ENCODE measurements at regions of chr17 and their contacts with region 1.

Region 1: DNA sequence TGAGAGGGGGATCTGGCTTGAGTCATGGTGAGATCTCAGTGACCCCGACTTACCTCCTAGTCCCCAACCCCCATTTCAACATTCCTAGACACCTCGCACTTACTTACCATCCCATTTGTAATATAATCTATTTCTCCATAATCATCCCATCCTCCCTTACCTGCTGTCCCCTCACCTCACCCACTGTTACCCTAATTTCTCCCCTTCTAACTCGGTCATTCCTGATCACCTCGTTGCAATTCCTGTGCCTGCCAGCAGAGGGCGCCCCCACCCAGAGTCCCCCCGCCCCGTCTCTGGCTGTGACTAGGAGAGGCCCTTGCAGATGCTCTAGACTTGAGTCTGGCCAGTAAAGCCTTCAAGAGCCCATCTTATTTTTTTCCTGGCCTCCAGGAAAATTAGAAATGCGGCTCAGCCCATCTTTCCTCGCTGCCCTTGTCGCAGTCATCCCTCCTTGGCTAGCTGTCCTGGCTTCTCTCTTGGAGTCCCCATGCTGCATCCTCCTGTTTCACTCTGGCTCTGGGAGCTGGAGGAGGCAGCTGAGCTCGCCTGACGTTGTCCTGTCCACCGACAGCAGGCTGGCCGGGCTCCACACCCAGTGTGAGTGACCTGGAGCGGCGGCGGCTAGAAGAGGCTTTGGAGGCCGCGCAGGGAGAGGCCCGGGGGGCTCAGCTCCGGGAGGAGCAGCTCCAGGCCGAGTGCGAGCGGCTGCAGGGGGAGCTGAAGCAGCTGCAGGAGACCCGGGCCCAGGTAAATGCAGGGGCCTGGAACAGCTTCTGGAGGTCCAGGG is 5.0 kb downstream of the TBKBP1 start:
- DNase-seq: peak; percentile 51 to 90 (median 78)
- ATAC-seq: peak; percentile 53
- H3K4me3 ChIP-seq: no peak overlapping the region
- H3K4me3 Mint-ChIP-seq: peak overlapping the region; percentile 46
- H3K27ac ChIP-seq: no peak overlapping the region
- H3K27ac Mint-ChIP-seq: no peak overlapping the region
- H3K4me1 ChIP-seq: peaks cover 70% of the 10 kb centered on the region
- H3K4me1 Mint-ChIP-seq: peaks cover 45% of the 10 kb centered on the region
- H3K27me3 ChIP-seq: no peaks in the 10 kb centered on the region
- H3K27me3 Mint-ChIP-seq: no peaks in the 10 kb centered on the region
- CTCF ChIP-seq: peak; percentile 99

Region 2: DNA sequence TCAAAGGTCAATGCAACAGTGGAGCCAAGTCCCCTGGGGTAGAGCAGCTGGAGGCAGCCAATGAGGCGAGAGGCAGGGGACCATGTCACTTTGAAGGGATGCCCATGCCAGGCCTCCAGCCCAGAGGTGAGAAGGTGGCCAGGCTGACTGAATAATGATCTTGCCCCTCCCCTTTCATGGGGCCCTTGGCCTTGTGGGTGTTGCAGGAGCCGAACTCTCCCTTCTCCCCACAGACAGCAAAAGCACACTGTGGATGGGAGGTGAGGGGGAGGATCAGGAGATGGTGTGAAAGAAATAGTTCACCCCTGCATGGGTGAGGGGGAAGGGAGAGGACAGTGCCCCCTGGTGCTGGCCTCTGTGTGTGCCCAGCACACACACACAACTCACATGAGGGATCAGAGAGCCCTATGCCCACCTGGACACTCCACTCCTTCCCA is 18.3 kb after region 1 on chr17:
- CTCF ChIA-PET with region 1: interaction called, 3 read pairs
- POLR2A ChIA-PET with region 1: interaction called, 5 read pairs
- intact Hi-C with region 1: loop called in 1 of 2 experiments (anchors 1 kb)
- DNase-seq: peak in 3 of 14 experiments; percentile 22 to 61 (median 40)
- ATAC-seq: peak; percentile 37
- H3K4me3 ChIP-seq: no peak overlapping the region
- H3K4me3 Mint-ChIP-seq: no peak overlapping the region
- H3K27ac ChIP-seq: no peak overlapping the region
- H3K27ac Mint-ChIP-seq: no peak overlapping the region
- H3K4me1 ChIP-seq: peaks cover 99% of the 10 kb centered on the region
- H3K4me1 Mint-ChIP-seq: peaks cover 68% of the 10 kb centered on the region
- H3K27me3 ChIP-seq: peaks cover 0 to 6% of the 10 kb centered on the region in 2 experiments
- H3K27me3 Mint-ChIP-seq: peaks cover 15% of the 10 kb centered on the region
- CTCF ChIP-seq: peak; percentile 43

Region 3: DNA sequence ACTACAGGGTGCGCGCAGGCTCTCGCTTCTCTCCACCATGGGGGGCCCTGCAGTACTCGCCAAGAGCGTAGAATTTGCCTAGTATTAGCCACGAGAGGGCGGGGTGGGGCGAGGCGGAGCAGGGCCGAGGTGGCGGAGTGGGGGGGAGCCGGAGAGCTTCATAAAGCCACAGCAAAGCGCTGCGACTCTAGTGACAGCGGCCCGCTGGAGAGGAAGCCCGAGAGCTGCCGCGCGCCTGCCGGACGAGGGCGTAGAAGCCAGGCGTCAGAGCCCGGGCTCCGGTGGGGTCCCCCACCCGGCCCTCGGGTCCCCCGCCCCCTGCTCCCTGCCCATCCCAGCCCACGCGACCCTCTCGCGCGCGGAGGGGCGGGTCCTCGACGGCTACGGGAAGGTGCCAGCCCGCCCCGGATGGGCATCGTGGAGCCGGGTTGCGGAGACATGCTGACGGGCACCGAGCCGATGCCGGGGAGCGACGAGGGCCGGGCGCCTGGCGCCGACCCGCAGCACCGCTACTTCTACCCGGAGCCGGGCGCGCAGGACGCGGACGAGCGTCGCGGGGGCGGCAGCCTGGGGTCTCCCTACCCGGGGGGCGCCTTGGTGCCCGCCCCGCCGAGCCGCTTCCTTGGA is 34.2 kb after region 1 on chr17 and contains the start of gene TBX21:
- CTCF ChIA-PET with region 1: interaction called, 11 read pairs
- POLR2A ChIA-PET with region 1: interaction called, 4 read pairs
- intact Hi-C with region 1: no loop called
- DNase-seq: peak; percentile 79 to 95 (median 87)
- ATAC-seq: peak; percentile 91
- H3K4me3 ChIP-seq: peak within 1 kb of the TSS; percentile 90
- H3K4me3 Mint-ChIP-seq: peak within 1 kb of the TSS; percentile 95
- H3K27ac ChIP-seq: peak within 1 kb of the TSS in 1 of 2 donors; percentile 64
- H3K27ac Mint-ChIP-seq: peak within 1 kb of the TSS; percentile 85
- H3K4me1 ChIP-seq: peaks cover 67% of the 10 kb centered on the region
- H3K4me1 Mint-ChIP-seq: peaks cover 28% of the 10 kb centered on the region
- H3K27me3 ChIP-seq: peaks cover 0 to 2% of the 10 kb centered on the region in 2 experiments
- H3K27me3 Mint-ChIP-seq: peaks cover 11% of the 10 kb centered on the region
- CTCF ChIP-seq: peak; percentile 64
- total RNA-seq, gene TBX21: 10.6 to 12.3 TPM

Region 4: GRCh38 chr17:47742319-47743181 is 43.6 kb after region 1 on chr17:
- CTCF ChIA-PET with region 1: interaction called, 4 read pairs
- POLR2A ChIA-PET with region 1: interaction called, 3 read pairs
- intact Hi-C with region 1: loop called (anchors 1 kb)
- DNase-seq: peak in 12 of 14 experiments; percentile 23 to 73 (median 44)
- ATAC-seq: peak; percentile 67
- H3K4me3 ChIP-seq: no peak overlapping the region
- H3K4me3 Mint-ChIP-seq: no peak overlapping the region
- H3K27ac ChIP-seq: no peak overlapping the region
- H3K27ac Mint-ChIP-seq: no peak overlapping the region
- H3K4me1 ChIP-seq: peaks cover 54% of the 10 kb centered on the region
- H3K4me1 Mint-ChIP-seq: peaks cover 12% of the 10 kb centered on the region
- H3K27me3 ChIP-seq: no peaks in the 10 kb centered on the region
- H3K27me3 Mint-ChIP-seq: no peaks in the 10 kb centered on the region
- CTCF ChIP-seq: peak; percentile 60

Region 5: DNA sequence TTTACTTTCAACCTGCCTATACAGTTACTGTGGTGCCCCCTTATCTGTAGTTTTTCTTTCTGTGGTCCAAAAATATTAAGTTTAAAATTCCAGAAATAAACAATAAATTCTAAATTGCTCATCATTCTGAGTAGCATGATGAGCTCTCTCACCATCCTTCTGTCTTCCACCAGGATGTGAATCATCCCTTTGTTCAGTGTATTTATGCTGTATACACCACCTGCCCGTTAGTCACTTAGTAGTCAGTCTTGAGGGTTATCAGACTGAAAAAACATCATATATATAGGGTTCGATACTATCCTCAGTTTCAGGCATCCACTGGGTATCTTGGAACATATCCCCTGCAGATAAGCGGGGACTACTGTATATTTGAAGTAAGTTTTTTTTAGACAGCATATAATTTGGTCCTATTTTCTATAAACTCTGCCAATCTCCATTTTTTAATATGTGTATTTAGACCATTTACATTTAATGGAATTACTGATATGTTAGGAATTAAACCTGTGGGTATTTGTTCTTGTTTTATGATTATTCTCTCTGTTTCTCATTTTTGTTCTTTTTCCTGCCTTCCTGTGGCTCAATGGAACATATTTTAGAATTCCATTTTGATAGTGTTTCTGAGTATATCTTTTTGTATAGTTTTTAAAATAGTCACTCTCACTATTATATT is 65.1 kb after region 1 on chr17:
- CTCF ChIA-PET with region 1: no interaction called
- POLR2A ChIA-PET with region 1: no interaction called
- intact Hi-C with region 1: no loop called
- DNase-seq: no peak
- ATAC-seq: no peak
- H3K4me3 ChIP-seq: no peak overlapping the region
- H3K4me3 Mint-ChIP-seq: no peak overlapping the region
- H3K27ac ChIP-seq: no peak overlapping the region
- H3K27ac Mint-ChIP-seq: no peak overlapping the region
- H3K4me1 ChIP-seq: peaks cover 7% of the 10 kb centered on the region
- H3K4me1 Mint-ChIP-seq: no peaks in the 10 kb centered on the region
- H3K27me3 ChIP-seq: no peaks in the 10 kb centered on the region
- H3K27me3 Mint-ChIP-seq: peaks cover 49% of the 10 kb centered on the region
- CTCF ChIP-seq: no peak

Region 6: GRCh38 chr17:47802341-47803022 is 103.5 kb after region 1 on chr17:
- CTCF ChIA-PET with region 1: interaction called, 4 read pairs
- POLR2A ChIA-PET with region 1: no interaction called
- intact Hi-C with region 1: loop called (anchors 2 to 5 kb)
- DNase-seq: peak; percentile 37 to 74 (median 47)
- ATAC-seq: peak; percentile 97
- H3K4me3 ChIP-seq: no peak overlapping the region
- H3K4me3 Mint-ChIP-seq: no peak overlapping the region
- H3K27ac ChIP-seq: no peak overlapping the region
- H3K27ac Mint-ChIP-seq: no peak overlapping the region
- H3K4me1 ChIP-seq: peaks cover 5% of the 10 kb centered on the region
- H3K4me1 Mint-ChIP-seq: no peaks in the 10 kb centered on the region
- H3K27me3 ChIP-seq: no peaks in the 10 kb centered on the region
- H3K27me3 Mint-ChIP-seq: peaks cover 2% of the 10 kb centered on the region
- CTCF ChIP-seq: peak; percentile 66

Region 7: GRCh38 chr17:48011405-48012150 is 312.6 kb after region 1 on chr17:
- CTCF ChIA-PET with region 1: no interaction called
- POLR2A ChIA-PET with region 1: no interaction called
- intact Hi-C with region 1: no loop called
- DNase-seq: peak in 11 of 14 experiments; percentile 18 to 68 (median 39)
- ATAC-seq: peak; percentile 76
- H3K4me3 ChIP-seq: peak overlapping the region; percentile 43
- H3K4me3 Mint-ChIP-seq: peak overlapping the region; percentile 71
- H3K27ac ChIP-seq: no peak overlapping the region
- H3K27ac Mint-ChIP-seq: no peak overlapping the region
- H3K4me1 ChIP-seq: peaks cover 14% of the 10 kb centered on the region
- H3K4me1 Mint-ChIP-seq: peaks cover 16% of the 10 kb centered on the region
- H3K27me3 ChIP-seq: peaks cover 32 to 46% of the 10 kb centered on the region in 2 experiments
- H3K27me3 Mint-ChIP-seq: peaks cover 66% of the 10 kb centered on the region
- CTCF ChIP-seq: peak; percentile 46